Activated CD8-positive, alpha-beta T cell treated with anti-CD3 and anti-CD28 coated beads, Interleukin-2, amount 10 ng/mL, durations not matched to agents 7 days and 5 days (primary cell): ENCODE measurements at regions of chr5 and their contacts with region 1.

Region 1: GRCh38 chr5:172777881-172778814 is 7.2 kb upstream of the DUSP1 start:
- DNase-seq: peak; percentile 29
- ATAC-seq: peak; percentile 53
- H3K4me3 Mint-ChIP-seq: peak overlapping the region; percentile 55
- H3K27ac Mint-ChIP-seq: peak overlapping the region; percentile 87
- H3K4me1 Mint-ChIP-seq: peaks cover 36% of the 10 kb centered on the region
- H3K27me3 Mint-ChIP-seq: no peaks in the 10 kb centered on the region

Region 2: GRCh38 chr5:172764849-172765765 is 13.0 kb before region 1 on chr5:
- CTCF ChIA-PET with region 1: no interaction called
- POLR2A ChIA-PET with region 1: interaction called, 15 read pairs
- DNase-seq: peak; percentile 98
- ATAC-seq: peak; percentile 73
- H3K4me3 Mint-ChIP-seq: peak overlapping the region; percentile 77
- H3K27ac Mint-ChIP-seq: peak overlapping the region; percentile 89
- H3K4me1 Mint-ChIP-seq: peaks cover 40% of the 10 kb centered on the region
- H3K27me3 Mint-ChIP-seq: peaks cover 6% of the 10 kb centered on the region

Region 3: GRCh38 chr5:172858990-172859811 is 81.1 kb after region 1 on chr5:
- CTCF ChIA-PET with region 1: no interaction called
- POLR2A ChIA-PET with region 1: no interaction called
- DNase-seq: no peak
- ATAC-seq: no peak
- H3K4me3 Mint-ChIP-seq: no peak overlapping the region
- H3K27ac Mint-ChIP-seq: no peak overlapping the region
- H3K4me1 Mint-ChIP-seq: peaks cover 21% of the 10 kb centered on the region
- H3K27me3 Mint-ChIP-seq: no peaks in the 10 kb centered on the region